Caco-2 (cell line): ENCODE measurements at regions of chr9 and their contacts with region 1.

Region 1: DNA sequence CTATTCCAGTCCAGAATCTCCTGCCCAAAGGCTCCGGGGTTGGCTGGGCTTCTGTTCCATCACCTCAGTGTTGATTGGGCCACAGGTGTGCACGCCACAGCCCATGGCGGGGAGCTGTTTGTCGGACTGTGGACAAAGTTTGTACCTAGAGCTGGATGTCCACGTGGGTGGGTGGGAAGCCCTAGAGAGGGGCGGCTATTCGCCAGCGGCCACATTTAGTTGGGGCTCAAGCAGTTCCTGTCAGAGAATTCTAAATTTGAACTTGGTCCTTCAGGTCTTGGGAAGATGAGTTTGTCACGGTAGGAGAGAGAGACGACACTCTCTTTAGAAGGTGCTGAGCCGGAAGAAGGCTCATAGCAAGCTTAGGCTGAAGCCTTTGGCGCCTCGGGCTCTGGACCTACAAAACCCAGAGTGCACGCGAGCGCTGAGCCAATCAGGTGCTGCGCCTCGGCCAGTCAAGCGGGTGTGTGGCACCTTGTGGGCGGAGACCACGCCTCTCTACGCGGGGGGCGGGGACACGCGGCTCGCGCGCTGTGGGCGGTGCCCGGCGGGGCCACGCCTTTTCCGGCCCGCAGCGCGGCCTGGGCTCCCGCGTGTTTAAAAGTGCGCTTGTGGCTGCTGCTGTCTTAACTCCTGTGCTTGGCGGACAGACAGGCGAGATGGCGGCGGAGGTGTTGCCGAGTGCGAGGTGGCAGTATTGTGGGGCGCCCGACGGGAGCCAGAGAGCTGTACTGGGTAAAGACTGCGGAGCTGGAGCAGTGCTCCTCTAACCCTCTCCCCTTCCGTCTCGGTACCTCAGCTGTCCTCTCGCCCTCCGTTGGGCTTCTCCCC is at the start of gene POLR1E:
- DNase-seq: peak; percentile 97 to 98
- H3K4me3 ChIP-seq: peak within 1 kb of the TSS; percentile 96
- H3K4me3 Mint-ChIP-seq: peak within 1 kb of the TSS; percentile 93
- H3K27ac Mint-ChIP-seq: peak within 1 kb of the TSS; percentile 89
- H3K4me1 ChIP-seq: peaks cover 24% of the 10 kb centered on the region
- H3K4me1 Mint-ChIP-seq: peaks cover 22% of the 10 kb centered on the region
- H3K27me3 ChIP-seq: no peaks in the 10 kb centered on the region
- H3K27me3 Mint-ChIP-seq: no peaks in the 10 kb centered on the region
- CTCF ChIP-seq: no peak
- total RNA-seq, gene POLR1E: 30.1 and 33.4 TPM in 2 replicates

Region 2: DNA sequence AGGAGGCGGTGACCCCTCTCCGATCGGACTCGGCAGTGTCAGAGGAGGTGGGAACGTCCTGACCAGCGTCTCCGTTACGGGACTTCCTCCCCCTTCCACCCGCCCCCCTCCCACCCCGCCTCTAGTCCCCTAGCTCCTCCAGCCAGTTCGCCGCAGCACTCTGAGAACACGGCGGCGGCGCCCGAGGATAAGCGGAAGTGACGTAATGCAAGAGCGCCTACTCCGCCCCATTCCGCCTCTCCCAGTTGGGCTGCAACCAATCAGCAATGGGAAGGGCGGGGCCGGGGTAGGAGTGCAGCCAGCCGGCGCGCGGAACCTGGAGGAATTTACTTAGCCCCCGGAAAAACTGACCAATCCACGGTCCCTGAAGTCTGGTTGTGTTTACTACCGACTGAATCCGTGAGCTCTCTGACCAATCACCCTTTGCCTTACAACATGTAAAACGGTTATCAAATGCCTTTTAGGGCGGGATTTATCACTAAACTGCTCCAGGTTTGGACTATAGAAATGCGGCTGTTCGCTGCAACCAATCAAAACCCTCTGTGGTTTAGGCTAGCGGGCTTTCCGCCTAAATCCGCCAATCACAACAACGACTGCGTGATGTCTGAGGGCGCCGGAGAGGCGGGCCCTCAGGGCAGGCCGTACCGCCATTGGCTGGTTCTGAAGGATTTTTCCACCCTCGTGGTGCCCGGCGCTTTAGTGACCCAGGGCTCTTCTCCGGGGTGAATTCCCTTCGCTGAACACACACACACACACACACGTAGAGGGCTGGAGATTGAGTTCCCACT is 20.2 kb before region 1 on chr9 and contains the start of gene ZBTB5:
- CTCF ChIA-PET with region 1: interaction called, 3 read pairs
- POLR2A ChIA-PET with region 1: interaction called, 24 read pairs
- intact Hi-C with region 1: loop called (anchors 2 kb)
- DNase-seq: peak; percentile 99
- H3K4me3 ChIP-seq: peak within 1 kb of the TSS; percentile 89
- H3K4me3 Mint-ChIP-seq: peak within 1 kb of the TSS; percentile 95
- H3K27ac Mint-ChIP-seq: peak within 1 kb of the TSS; percentile 96
- H3K4me1 ChIP-seq: peaks cover 12% of the 10 kb centered on the region
- H3K4me1 Mint-ChIP-seq: peaks cover 21% of the 10 kb centered on the region
- H3K27me3 ChIP-seq: no peaks in the 10 kb centered on the region
- H3K27me3 Mint-ChIP-seq: no peaks in the 10 kb centered on the region
- CTCF ChIP-seq: no peak
- total RNA-seq, gene ZBTB5: 12.5 and 13.2 TPM in 2 replicates

Region 3: DNA sequence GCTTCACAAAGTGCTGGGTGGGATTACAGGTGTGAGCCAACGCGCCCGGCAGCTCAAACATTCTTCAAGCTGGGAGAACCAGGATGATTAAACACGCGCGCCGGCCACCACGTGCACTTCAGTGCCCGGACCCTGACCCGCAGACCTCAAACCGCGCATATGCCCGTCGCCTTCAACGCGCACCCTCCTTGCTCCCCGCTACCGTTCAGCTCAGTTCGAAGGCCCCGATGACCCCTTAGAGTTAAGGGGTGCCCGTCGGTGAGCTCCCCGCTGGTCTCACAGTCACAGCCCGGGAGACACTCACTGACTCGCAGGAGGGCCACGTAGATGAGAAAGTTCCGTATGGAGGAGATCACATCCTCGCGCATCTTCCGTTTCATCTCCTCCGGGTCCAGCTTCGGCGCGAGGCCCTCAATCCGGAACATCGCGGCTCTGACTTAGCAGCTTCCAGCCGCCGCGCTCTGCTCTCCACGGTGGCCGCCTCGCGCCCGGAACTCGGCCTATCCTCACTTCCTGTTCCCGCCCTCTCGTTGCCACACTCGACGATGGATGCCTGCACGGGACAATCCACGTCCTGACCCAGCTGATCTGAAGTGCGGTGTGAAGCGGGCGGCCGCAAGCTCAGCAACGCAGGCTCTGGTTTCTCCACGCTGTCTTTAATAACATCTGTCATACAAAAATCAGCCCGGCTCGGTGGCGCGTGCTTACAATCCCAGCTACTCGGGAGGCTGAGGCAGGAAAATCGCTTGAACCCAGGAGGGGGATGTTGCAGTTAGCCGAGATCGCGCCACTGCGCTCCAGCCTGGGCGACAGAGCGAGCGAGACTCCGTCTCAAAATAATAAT is 106.7 kb after region 1 on chr9 and contains the start of gene TOMM5:
- CTCF ChIA-PET with region 1: no interaction called
- POLR2A ChIA-PET with region 1: interaction called, 7 read pairs
- intact Hi-C with region 1: loop called (anchors 5 kb)
- DNase-seq: peak; percentile 93 to 96
- H3K4me3 ChIP-seq: peak within 1 kb of the TSS; percentile 90
- H3K4me3 Mint-ChIP-seq: peak within 1 kb of the TSS; percentile 98
- H3K27ac Mint-ChIP-seq: peak within 1 kb of the TSS; percentile 99
- H3K4me1 ChIP-seq: peaks cover 13% of the 10 kb centered on the region
- H3K4me1 Mint-ChIP-seq: peaks cover 19% of the 10 kb centered on the region
- H3K27me3 ChIP-seq: no peaks in the 10 kb centered on the region
- H3K27me3 Mint-ChIP-seq: no peaks in the 10 kb centered on the region
- CTCF ChIP-seq: no peak
- total RNA-seq, gene TOMM5: 185 and 201 TPM in 2 replicates

Region 4: GRCh38 chr9:37706290-37706689 is 220.7 kb after region 1 on chr9:
- CTCF ChIA-PET with region 1: no interaction called
- POLR2A ChIA-PET with region 1: no interaction called
- intact Hi-C with region 1: loop called (anchors 10 kb)
- DNase-seq: no peak
- H3K4me3 ChIP-seq: no peak overlapping the region
- H3K4me3 Mint-ChIP-seq: no peak overlapping the region
- H3K27ac Mint-ChIP-seq: no peak overlapping the region
- H3K4me1 ChIP-seq: peaks cover under 1% of the 10 kb centered on the region; the same call in 1 of the 2 replicates
- H3K4me1 Mint-ChIP-seq: peaks cover 3% of the 10 kb centered on the region
- H3K27me3 ChIP-seq: no peaks in the 10 kb centered on the region
- H3K27me3 Mint-ChIP-seq: peaks cover 11% of the 10 kb centered on the region
- CTCF ChIP-seq: no peak

Region 5: DNA sequence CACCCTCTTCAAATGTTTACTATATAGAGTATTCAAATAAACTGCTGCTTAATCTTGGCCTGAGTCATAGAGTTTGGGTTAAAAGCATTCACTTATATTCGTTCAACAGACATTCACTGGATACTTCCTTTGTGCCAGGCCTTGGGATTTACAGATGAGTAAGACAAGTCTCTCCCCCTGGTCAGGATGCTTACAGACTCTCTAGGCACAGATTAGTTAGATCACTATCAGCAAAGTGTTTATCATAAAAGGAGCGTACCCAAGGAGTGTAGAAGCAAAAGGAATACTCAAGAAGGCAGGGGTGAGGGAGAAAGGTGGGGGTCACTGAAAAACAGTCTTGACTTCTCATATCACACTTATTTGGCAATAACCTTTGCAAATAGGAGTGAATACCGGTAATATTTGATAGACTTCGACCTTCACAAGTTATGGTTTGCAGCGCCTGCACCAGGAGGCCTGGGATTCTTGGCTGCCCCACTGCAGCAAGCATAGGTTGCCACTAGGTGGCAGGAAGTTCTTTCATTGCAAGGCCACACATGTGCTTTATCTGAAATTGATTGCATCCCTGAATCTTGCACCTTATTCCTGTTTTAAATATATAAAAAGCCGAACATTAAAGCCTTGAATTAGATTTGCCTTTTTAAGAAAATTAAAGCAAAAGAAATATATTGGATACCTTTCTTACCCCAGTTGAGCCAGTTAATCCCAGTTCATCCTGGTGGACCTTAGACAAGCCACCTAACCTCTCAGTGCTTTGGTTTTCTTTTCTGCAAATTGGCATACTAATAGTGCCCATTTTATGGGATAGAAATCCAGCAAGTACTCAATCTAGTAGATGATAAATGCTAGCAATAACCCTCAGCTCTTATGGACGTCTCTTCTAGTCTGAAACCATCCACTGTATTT is 261.5 kb after region 1 on chr9:
- CTCF ChIA-PET with region 1: no interaction called
- POLR2A ChIA-PET with region 1: no interaction called
- intact Hi-C with region 1: loop called (anchors 1 kb)
- DNase-seq: peak; percentile 61 to 73
- H3K4me3 ChIP-seq: no peak overlapping the region
- H3K4me3 Mint-ChIP-seq: no peak overlapping the region
- H3K27ac Mint-ChIP-seq: no peak overlapping the region
- H3K4me1 ChIP-seq: no peaks in the 10 kb centered on the region
- H3K4me1 Mint-ChIP-seq: no peaks in the 10 kb centered on the region
- H3K27me3 ChIP-seq: no peaks in the 10 kb centered on the region
- H3K27me3 Mint-ChIP-seq: no peaks in the 10 kb centered on the region
- CTCF ChIP-seq: peak; percentile 85 to 90

Region 6: GRCh38 chr9:37784616-37785483 is 299.2 kb after region 1 on chr9 and contains the start of gene EXOSC3:
- CTCF ChIA-PET with region 1: interaction called, 3 read pairs
- POLR2A ChIA-PET with region 1: no interaction called
- intact Hi-C with region 1: loop called (anchors 1 kb)
- DNase-seq: peak; percentile 91 to 92
- H3K4me3 ChIP-seq: peak within 1 kb of the TSS; percentile 97
- H3K4me3 Mint-ChIP-seq: peak within 1 kb of the TSS; percentile 97
- H3K27ac Mint-ChIP-seq: peak within 1 kb of the TSS; percentile 98
- H3K4me1 ChIP-seq: 0 out of 2 replicates have a peak, but pooled peaks cover 3% of the 10 kb centered on the region
- H3K4me1 Mint-ChIP-seq: peaks cover 9% of the 10 kb centered on the region
- H3K27me3 ChIP-seq: no peaks in the 10 kb centered on the region
- H3K27me3 Mint-ChIP-seq: no peaks in the 10 kb centered on the region
- CTCF ChIP-seq: peak; percentile 25 to 28
- total RNA-seq, gene EXOSC3: 60.3 and 70.6 TPM in 2 replicates

Region 7: GRCh38 chr9:37812773-37813379 is 327.3 kb after region 1 on chr9:
- CTCF ChIA-PET with region 1: no interaction called
- POLR2A ChIA-PET with region 1: no interaction called
- intact Hi-C with region 1: no loop called
- DNase-seq: no peak
- H3K4me3 ChIP-seq: no peak overlapping the region
- H3K4me3 Mint-ChIP-seq: no peak overlapping the region
- H3K27ac Mint-ChIP-seq: no peak overlapping the region
- H3K4me1 ChIP-seq: no peaks in the 10 kb centered on the region
- H3K4me1 Mint-ChIP-seq: no peaks in the 10 kb centered on the region
- H3K27me3 ChIP-seq: no peaks in the 10 kb centered on the region
- H3K27me3 Mint-ChIP-seq: no peaks in the 10 kb centered on the region
- CTCF ChIP-seq: no peak